ENCODE measurements at regions of chr7 and their contacts with region 1.

Region 1: GRCh38 chr7:128069373-128070364 is 38.4 kb upstream of the LRRC4 start:
- DNase-seq: no peak
- ATAC-seq: no peak
- H3K4me3 ChIP-seq: no peak overlapping the region
- H3K27ac ChIP-seq: no peak overlapping the region
- H3K4me1 ChIP-seq: no peaks in the 10 kb centered on the region
- H3K27me3 ChIP-seq: no peaks in the 10 kb centered on the region
- CTCF ChIP-seq: no peak
- EP300 ChIP-seq: no peak
- POLR2A ChIP-seq: no peak
- RAD21 ChIP-seq: no peak

Region 2: DNA sequence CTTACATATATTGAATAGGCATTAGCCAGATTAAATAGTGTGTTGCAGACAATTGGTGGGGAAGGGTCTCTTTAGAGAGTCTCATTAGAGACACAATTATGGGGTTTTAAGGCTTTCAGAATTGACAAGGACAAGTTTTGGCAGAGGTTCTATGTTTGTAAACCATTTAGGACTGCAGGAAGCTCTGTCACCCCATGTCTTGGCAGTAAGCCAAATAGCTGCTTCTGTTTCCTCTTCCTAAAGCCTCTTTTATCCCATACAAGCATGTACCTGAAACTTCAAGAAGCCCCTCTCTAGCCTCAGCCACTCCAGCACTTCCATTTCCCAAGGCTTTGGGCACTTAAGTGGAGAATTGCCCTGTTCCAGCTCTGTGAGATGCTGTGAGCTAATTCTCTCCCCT is 16.6 kb before region 1 on chr7:
- CTCF ChIA-PET with region 1: no interaction called
- POLR2A ChIA-PET with region 1: no interaction called
- RAD21 ChIA-PET with region 1: no interaction called
- SMC1A ChIA-PET with region 1: no interaction called
- in situ Hi-C with region 1: no loop called
- intact Hi-C with region 1: no loop called
- DNase-seq: no peak
- ATAC-seq: no peak
- H3K4me3 ChIP-seq: no peak overlapping the region
- H3K27ac ChIP-seq: no peak overlapping the region
- H3K4me1 ChIP-seq: no peaks in the 10 kb centered on the region
- H3K27me3 ChIP-seq: no peaks in the 10 kb centered on the region
- CTCF ChIP-seq: no peak
- EP300 ChIP-seq: no peak
- POLR2A ChIP-seq: no peak
- RAD21 ChIP-seq: no peak

Region 3: GRCh38 chr7:128103498-128104034 is 33.9 kb after region 1 on chr7:
- CTCF ChIA-PET with region 1: no interaction called
- POLR2A ChIA-PET with region 1: no interaction called
- RAD21 ChIA-PET with region 1: interaction called, 3 read pairs
- SMC1A ChIA-PET with region 1: no interaction called
- in situ Hi-C with region 1: no loop called
- intact Hi-C with region 1: loop called (anchors 1 kb)
- DNase-seq: no peak
- ATAC-seq: peak; percentile 68
- H3K4me3 ChIP-seq: peak overlapping the region; percentile 71
- H3K27ac ChIP-seq: no peak overlapping the region
- H3K4me1 ChIP-seq: peaks cover 7% of the 10 kb centered on the region
- H3K27me3 ChIP-seq: no peaks in the 10 kb centered on the region
- CTCF ChIP-seq: no peak
- EP300 ChIP-seq: no peak
- POLR2A ChIP-seq: peak; percentile 44; the same call in 1 of the 2 replicates
- RAD21 ChIP-seq: no peak

Region 4: DNA sequence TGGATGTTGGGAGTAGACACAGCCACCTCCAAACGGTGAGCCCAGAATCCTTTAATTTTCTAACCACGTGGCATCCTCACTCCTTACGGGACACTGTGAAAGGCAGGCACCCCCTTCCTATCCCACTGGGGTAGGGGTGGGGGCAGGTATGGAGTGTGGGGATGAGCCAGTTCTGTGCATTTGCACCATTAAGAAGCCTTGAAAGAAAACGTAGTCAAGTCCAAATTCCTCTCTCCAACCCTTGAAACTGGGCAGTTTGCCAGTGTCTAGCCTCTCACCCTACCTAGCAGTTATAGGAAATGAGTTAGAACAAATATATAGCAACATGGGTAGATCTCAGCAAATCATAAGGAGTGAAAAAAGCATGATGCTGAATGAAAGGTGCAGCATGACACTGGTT is 79.0 kb after region 1 on chr7:
- CTCF ChIA-PET with region 1: no interaction called
- POLR2A ChIA-PET with region 1: no interaction called
- RAD21 ChIA-PET with region 1: no interaction called
- SMC1A ChIA-PET with region 1: no interaction called
- in situ Hi-C with region 1: no loop called
- intact Hi-C with region 1: no loop called
- DNase-seq: no peak
- ATAC-seq: no peak
- H3K4me3 ChIP-seq: no peak overlapping the region
- H3K27ac ChIP-seq: no peak overlapping the region
- H3K4me1 ChIP-seq: no peaks in the 10 kb centered on the region
- H3K27me3 ChIP-seq: peaks cover 0 to 5% of the 10 kb centered on the region in 2 experiments; a peak in 3 of 4 replicates
- CTCF ChIP-seq: no peak
- EP300 ChIP-seq: no peak
- POLR2A ChIP-seq: no peak
- RAD21 ChIP-seq: no peak

Measured in GM12878 (cell line).